ENCODE measurements at regions of chr7 and their contacts with region 1.

Region 1: DNA sequence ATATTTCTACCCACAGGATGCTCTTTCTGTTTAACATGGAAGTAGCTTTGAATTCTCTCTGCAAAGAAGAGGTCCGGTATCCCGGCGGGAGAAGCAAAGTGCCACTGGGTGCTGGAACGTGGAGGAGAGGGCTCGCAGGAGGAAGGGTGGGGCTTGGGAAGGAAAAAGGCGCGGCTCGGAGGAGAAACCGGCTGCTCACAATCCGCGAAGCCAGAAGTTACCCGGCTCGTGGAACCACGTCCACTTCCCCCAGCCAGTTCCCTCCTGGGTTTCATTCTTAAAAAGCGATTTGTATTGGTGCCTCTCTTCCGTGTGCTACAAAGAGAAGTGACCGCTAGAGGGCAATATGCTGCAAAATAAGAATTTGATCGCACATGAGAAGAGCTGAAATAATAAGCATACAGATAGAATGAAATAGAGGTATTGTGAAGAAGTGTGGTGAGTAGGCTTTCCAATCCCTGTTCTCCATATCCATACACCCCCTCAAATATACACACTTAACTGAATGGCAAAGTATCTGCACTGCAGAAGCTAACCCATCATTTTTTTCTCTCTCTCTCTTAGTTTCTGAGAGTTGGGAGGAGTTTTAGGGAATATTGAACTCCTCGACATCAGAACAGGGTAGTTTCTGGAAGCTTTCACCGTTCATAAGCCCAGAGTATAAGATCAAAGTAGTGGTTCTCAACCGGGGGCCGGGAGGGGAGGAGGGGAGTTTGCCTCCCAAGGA is 31.1 kb downstream of the TRIL start:
- DNase-seq: peak; percentile 75
- ATAC-seq: peak; percentile 96
- H3K4me3 Mint-ChIP-seq: peak overlapping the region; percentile 74
- H3K27ac Mint-ChIP-seq: no peak overlapping the region
- H3K4me1 Mint-ChIP-seq: peaks cover 23% of the 10 kb centered on the region
- H3K27me3 Mint-ChIP-seq: peaks cover 23% of the 10 kb centered on the region

Region 2: DNA sequence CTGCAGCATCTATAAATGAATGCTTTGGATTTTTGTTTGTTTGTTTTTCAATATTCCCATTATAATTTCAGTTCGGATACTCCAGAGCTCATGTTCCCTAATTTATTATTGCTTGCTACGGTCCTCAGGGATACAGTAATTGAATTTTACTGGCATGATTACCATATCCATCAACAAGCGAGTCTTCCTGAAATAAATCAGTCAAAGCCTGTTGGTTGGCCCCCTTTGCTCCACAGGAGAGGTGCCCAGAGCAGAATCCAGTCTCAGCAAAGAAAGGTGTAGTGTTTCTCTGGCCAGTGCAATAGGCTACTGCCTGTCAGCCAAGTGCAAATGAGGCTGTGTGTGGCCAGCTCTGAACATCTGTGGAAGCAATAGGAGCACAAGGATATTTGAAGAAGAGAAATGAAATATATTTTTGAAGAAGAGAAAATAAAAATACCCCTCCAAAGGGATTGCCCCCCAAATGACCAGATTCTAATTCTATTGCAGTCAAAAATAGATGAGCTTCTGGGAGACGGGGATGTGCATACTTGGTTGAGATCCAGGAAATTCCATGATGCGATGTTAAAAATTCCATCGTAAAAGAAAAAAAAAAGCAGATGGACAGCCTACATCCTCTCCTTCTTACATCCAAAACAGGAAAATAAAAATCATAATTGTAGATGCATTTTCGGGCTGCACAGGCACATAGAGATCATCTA is 13.0 kb after region 1 on chr7:
- CTCF ChIA-PET with region 1: interaction called, 21 read pairs
- DNase-seq: no peak
- ATAC-seq: no peak
- H3K4me3 Mint-ChIP-seq: no peak overlapping the region
- H3K27ac Mint-ChIP-seq: no peak overlapping the region
- H3K4me1 Mint-ChIP-seq: no peaks in the 10 kb centered on the region
- H3K27me3 Mint-ChIP-seq: peaks cover 35% of the 10 kb centered on the region

Region 3: GRCh38 chr7:28955718-28956619 is 28.9 kb after region 1 on chr7:
- CTCF ChIA-PET with region 1: interaction called, 34 read pairs
- DNase-seq: no peak
- ATAC-seq: peak; percentile 16
- H3K4me3 Mint-ChIP-seq: no peak overlapping the region
- H3K27ac Mint-ChIP-seq: no peak overlapping the region
- H3K4me1 Mint-ChIP-seq: peaks cover 10% of the 10 kb centered on the region
- H3K27me3 Mint-ChIP-seq: peaks cover 81% of the 10 kb centered on the region

Region 4: DNA sequence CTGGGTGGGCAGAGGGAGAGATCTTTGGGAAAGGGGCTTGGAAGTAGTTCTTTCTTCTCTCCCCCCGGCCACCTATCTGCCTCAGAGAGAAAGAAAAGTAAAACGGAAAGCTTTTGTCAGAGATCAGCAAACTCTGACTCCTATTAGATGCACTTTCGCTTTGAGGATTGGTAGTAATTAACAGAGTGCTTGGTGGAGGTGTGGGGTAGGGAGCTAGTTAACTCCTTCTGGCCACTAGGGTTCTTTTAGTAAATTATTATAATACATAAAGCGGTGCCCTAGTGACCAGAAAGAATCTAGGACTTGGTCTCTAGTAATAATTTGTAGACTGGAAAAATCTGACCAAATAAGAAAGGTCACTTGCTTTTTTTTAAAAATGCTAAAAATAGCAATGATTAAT is 164.7 kb after region 1 on chr7:
- CTCF ChIA-PET with region 1: interaction called, 289 read pairs
- DNase-seq: no peak
- ATAC-seq: peak; percentile 91
- H3K4me3 Mint-ChIP-seq: peak overlapping the region; percentile 70
- H3K27ac Mint-ChIP-seq: peak overlapping the region; percentile 85
- H3K4me1 Mint-ChIP-seq: peaks cover 23% of the 10 kb centered on the region
- H3K27me3 Mint-ChIP-seq: peaks cover 18% of the 10 kb centered on the region

Region 5: GRCh38 chr7:29105752-29106668 is 179.0 kb after region 1 on chr7:
- CTCF ChIA-PET with region 1: interaction called, 289 read pairs
- DNase-seq: no peak
- ATAC-seq: peak; percentile 69
- H3K4me3 Mint-ChIP-seq: no peak overlapping the region
- H3K27ac Mint-ChIP-seq: no peak overlapping the region
- H3K4me1 Mint-ChIP-seq: no peaks in the 10 kb centered on the region
- H3K27me3 Mint-ChIP-seq: peaks cover 18% of the 10 kb centered on the region

Region 6: DNA sequence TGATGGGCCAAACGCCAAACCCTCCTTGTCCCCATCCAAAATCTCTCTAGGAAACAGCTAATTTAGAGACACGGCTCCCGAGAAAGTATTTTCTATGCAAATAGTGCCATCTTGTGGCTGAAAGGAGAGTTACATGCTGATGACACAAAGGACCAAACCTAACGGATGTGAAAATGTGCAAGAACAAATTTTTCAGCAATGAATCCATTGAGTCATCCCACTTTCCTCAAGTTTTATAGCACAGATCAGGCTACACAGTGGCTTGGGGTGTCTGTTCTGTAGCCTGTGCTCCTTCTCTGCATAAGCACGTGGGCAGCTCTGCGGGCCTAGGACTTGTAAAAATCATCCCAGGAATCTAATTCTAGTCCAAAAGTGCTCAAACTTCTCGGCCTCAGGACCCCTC is 481.8 kb after region 1 on chr7:
- CTCF ChIA-PET with region 1: interaction called, 43 read pairs
- DNase-seq: peak; percentile 63
- ATAC-seq: peak; percentile 55
- H3K4me3 Mint-ChIP-seq: no peak overlapping the region
- H3K27ac Mint-ChIP-seq: no peak overlapping the region
- H3K4me1 Mint-ChIP-seq: peaks cover 2% of the 10 kb centered on the region
- H3K27me3 Mint-ChIP-seq: no peaks in the 10 kb centered on the region